ENCODE measurements at regions of chr1 and their contacts with region 1.

Region 1: GRCh38 chr1:75203415-75204277 is 69.5 kb downstream of the LHX8 start:
- DNase-seq: no peak

Region 2: GRCh38 chr1:74771913-74772515 is 431.6 kb before region 1 on chr1:
- intact Hi-C with region 1: loop called (anchors 2 kb)
- DNase-seq: no peak